Activated CD8-positive, alpha-beta T cell treated with anti-CD3 and anti-CD28 coated beads for 36 hours (primary cell): ENCODE measurements at regions of chr6 and their contacts with region 1.

Region 1: DNA sequence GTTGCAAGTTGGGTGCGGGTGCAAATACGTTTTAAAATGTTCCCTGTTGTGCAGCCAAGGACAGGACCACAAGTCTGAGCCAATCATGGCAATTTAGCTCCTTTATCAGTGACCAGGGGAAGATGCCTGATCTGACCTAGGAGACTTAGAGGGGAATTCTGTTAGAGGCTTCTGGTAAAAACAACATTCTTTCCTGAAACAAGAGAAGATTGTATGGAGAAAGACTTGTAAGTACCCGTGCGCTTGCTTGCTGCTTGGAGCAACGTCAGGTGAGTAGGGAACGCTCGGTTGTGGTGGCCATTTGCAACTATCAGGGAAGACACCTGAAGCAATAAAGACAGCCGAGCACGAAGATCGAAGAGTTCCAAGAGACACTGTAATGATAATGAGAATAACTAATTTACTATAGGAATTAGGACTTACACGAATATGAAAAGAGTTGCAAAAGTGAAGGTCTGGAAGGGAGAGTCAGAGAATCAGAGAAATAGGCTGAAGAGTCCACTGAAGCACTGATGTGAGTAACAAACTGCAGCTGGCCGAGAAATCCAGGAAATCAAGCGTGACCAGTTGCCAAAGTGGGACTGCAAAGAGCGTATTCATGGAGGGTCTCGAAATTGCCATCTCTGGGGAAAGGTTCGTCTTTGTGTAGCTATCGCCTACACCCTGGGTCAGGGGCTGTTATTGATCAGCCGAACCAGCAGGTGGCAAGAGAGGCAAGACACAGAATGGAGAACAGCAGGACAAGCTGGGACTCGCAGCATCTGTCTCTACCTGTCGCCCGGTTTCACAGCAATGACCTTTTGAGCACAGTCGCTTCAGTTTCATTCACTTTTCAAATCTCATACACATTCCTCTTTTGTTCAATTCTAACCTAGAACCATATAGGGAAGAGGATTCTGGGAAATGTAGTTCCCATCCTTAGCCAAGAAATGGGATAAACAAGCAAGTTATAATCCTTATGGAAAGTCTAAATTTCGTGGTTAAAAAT is 26.1 kb downstream of the LOC128125822 start:
- DNase-seq: peak; percentile 83
- ATAC-seq: peak; percentile 100
- H3K4me3 Mint-ChIP-seq: peak overlapping the region; percentile 73
- H3K27ac Mint-ChIP-seq: no peak overlapping the region
- H3K4me1 Mint-ChIP-seq: no peaks in the 10 kb centered on the region
- H3K27me3 Mint-ChIP-seq: peaks cover 7% of the 10 kb centered on the region
- CTCF ChIP-seq: peak; percentile 92

Region 2: DNA sequence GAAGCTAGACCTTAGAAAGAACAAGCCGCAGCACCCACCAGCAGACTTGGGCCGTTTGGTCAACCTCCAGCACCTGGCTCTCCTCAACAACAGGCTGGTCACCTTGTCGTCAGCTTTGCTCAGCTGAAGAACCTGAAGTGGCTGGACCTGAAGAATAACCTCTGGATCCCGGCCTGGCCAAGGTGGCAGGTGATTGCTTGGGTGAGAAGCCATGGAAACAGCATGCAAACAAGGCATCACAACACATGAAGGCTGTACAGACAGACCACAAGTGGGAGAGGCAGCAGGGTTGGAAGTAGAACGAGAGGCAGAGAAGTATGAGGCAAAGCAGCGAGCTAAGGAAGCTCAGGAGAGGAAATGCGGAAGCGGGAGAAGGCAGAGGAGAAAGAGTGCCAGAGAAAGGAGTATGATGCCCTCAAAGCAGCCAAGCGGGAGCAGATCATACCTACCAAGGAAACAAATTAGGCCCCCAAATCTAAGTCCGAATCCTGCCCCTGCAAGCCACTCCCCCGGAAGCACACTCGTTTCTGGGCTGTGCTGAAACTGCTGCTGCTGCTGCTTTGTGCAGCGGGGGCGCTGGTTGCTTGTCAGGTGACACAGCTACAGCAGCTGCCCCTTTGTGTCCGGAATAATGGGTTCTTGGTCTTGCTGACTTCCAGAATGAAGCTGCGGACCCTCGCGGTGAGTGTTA is 156.9 kb before region 1 on chr6:
- CTCF ChIA-PET with region 1: no interaction called
- POLR2A ChIA-PET with region 1: no interaction called
- intact Hi-C with region 1: no loop called
- DNase-seq: peak; percentile 16
- ATAC-seq: peak; percentile 51
- H3K4me3 Mint-ChIP-seq: peak overlapping the region; percentile 47
- H3K27ac Mint-ChIP-seq: no peak overlapping the region
- H3K4me1 Mint-ChIP-seq: peaks cover 4% of the 10 kb centered on the region
- H3K27me3 Mint-ChIP-seq: no peaks in the 10 kb centered on the region
- CTCF ChIP-seq: no peak

Region 3: GRCh38 chr6:63584125-63584514 is 14.2 kb before region 1 on chr6:
- CTCF ChIA-PET with region 1: interaction called, 13 read pairs
- POLR2A ChIA-PET with region 1: no interaction called
- intact Hi-C with region 1: no loop called
- DNase-seq: no peak
- ATAC-seq: no peak
- H3K4me3 Mint-ChIP-seq: no peak overlapping the region
- H3K27ac Mint-ChIP-seq: no peak overlapping the region
- H3K4me1 Mint-ChIP-seq: no peaks in the 10 kb centered on the region
- H3K27me3 Mint-ChIP-seq: no peaks in the 10 kb centered on the region
- CTCF ChIP-seq: no peak

Region 4: GRCh38 chr6:63630466-63630865 is 32.1 kb after region 1 on chr6:
- CTCF ChIA-PET with region 1: interaction called, 21 read pairs
- POLR2A ChIA-PET with region 1: no interaction called
- intact Hi-C with region 1: no loop called
- DNase-seq: no peak
- ATAC-seq: no peak
- H3K4me3 Mint-ChIP-seq: no peak overlapping the region
- H3K27ac Mint-ChIP-seq: no peak overlapping the region
- H3K4me1 Mint-ChIP-seq: peaks cover 7% of the 10 kb centered on the region
- H3K27me3 Mint-ChIP-seq: peaks cover 1% of the 10 kb centered on the region
- CTCF ChIP-seq: no peak

Region 5: DNA sequence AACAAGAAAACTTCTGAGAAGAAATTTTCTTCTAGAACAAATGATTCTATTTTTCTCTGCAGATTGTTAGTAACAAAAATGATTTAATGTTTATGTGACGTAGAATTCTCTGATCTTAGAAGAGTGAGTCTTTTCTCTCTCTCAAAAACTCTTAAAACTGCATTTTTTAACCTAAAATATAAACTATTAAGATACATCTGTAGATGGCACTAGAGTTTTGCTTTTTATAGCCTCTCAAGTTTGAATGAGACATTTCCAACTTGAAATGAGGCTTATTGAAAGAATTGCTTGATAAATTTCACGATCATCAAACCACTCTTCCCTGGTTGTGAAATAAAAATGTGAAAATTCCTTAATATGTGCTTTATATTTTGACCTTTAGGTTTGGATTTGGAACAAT is 91.1 kb after region 1 on chr6:
- CTCF ChIA-PET with region 1: interaction called, 11 read pairs
- POLR2A ChIA-PET with region 1: no interaction called
- intact Hi-C with region 1: no loop called
- DNase-seq: no peak
- ATAC-seq: no peak
- H3K4me3 Mint-ChIP-seq: no peak overlapping the region
- H3K27ac Mint-ChIP-seq: no peak overlapping the region
- H3K4me1 Mint-ChIP-seq: peaks cover 28% of the 10 kb centered on the region
- H3K27me3 Mint-ChIP-seq: no peaks in the 10 kb centered on the region
- CTCF ChIP-seq: no peak

Region 6: DNA sequence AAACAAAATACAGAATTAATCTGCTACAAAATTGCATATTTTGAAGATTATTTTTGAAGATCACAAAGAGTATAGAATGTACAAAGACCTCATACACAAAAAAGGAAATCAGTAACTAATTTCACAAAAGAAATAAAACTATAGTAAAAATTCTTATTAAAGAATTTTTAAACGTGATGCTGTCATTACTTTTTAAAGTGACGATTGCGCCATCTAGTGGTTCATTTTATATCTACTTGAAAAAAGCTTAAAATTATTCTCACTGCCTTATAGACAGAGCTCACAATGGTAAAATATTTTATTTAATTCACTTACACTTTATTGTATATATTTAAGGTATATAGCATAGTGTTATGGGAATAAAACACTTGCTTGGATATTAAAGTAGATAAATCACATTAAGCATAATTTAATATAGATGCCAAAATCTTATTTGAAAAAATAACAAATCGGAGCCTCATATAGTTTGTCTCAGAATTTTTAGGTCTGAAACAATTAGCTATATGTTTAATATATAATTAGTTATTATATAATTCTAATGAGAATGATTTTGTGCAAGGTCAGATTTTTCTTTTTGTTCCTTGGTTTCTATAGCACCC is 166.1 kb after region 1 on chr6:
- CTCF ChIA-PET with region 1: interaction called, 136 read pairs
- POLR2A ChIA-PET with region 1: no interaction called
- intact Hi-C with region 1: loop called (anchors 1 kb)
- DNase-seq: no peak
- ATAC-seq: no peak
- H3K4me3 Mint-ChIP-seq: no peak overlapping the region
- H3K27ac Mint-ChIP-seq: no peak overlapping the region
- H3K4me1 Mint-ChIP-seq: no peaks in the 10 kb centered on the region
- H3K27me3 Mint-ChIP-seq: peaks cover 7% of the 10 kb centered on the region
- CTCF ChIP-seq: peak; percentile 61

Region 7: DNA sequence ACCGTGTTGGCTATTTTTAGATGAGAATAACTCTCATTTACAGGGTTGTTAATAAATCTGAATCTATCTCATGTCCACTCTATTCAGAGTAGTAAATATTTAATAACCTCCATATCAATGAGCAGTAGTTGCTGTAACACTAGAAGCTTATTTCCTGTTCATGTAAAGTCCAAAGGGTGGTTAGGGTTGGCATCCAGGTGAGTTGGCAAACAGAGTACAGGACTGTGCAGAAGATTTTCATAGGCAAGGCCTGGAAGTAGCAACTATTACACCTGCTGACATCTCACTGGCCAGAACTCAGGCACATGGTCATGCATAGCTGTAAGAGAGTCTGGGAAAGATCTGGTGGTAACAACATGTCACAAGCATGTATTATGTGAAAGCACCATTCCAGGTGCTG is 184.8 kb after region 1 on chr6:
- CTCF ChIA-PET with region 1: no interaction called
- POLR2A ChIA-PET with region 1: no interaction called
- intact Hi-C with region 1: no loop called
- DNase-seq: no peak
- ATAC-seq: no peak
- H3K4me3 Mint-ChIP-seq: no peak overlapping the region
- H3K27ac Mint-ChIP-seq: no peak overlapping the region
- H3K4me1 Mint-ChIP-seq: no peaks in the 10 kb centered on the region
- H3K27me3 Mint-ChIP-seq: peaks cover 11% of the 10 kb centered on the region
- CTCF ChIP-seq: no peak